Heart right ventricle (tissue), 16 donors: ENCODE measurements at regions of chr20 and their contacts with region 1.

Region 1: DNA sequence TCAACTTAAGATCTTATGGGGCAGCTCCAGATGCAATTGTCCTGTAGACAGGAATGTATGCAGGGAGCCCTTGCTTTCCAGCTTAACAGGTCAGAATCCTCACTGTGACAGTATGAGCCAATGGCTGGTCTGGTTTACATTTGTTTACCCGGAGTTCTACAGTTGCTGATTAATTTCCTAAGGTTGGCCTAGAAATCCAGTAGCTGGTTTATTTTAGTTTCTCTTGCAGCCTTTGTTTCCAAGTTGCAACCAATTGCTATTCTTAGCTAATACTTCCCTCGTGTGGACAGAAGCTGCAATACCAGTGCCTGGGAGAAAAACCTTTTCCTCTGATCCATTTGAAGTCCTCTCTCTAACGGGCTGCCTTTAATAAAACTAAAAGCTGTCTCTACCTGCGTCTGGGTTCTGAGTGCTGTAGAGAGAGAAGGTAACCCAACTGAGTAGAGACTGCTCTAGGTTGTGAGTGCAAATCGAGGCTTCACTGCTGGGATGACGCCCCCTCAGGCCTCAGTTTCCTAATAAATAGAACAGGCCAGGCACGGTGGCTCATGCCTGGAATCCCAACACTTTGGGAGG is 45.9 kb downstream of the ZNF217 start:
- DNase-seq: peak in 1 of 2 donors; percentile 45
- ATAC-seq: peak in 7 of 8 donors; percentile 70 to 85 (median 80)
- H3K4me3 ChIP-seq: no peak overlapping the region
- H3K27ac ChIP-seq: no peak overlapping the region
- H3K4me1 ChIP-seq: peaks cover 0 to 10% (median 7%) of the 10 kb centered on the region in 9 donors
- H3K27me3 ChIP-seq: no peaks in the 10 kb centered on the region
- CTCF ChIP-seq: peak; percentile 61 to 90 (median 81)

Region 2: GRCh38 chr20:52242237-52243230 is 1305.2 kb before region 1 on chr20:
- intact Hi-C with region 1: loop called in 4 of 10 experiments (anchors 5 to 10 kb)
- DNase-seq: no peak
- ATAC-seq: no peak
- H3K4me3 ChIP-seq: no peak overlapping the region
- H3K27ac ChIP-seq: no peak overlapping the region
- H3K4me1 ChIP-seq: no peaks in the 10 kb centered on the region
- H3K27me3 ChIP-seq: peaks cover 0 to 18% (median 6%) of the 10 kb centered on the region in 7 donors
- CTCF ChIP-seq: peak; percentile 54 to 78 (median 69)

Region 3: DNA sequence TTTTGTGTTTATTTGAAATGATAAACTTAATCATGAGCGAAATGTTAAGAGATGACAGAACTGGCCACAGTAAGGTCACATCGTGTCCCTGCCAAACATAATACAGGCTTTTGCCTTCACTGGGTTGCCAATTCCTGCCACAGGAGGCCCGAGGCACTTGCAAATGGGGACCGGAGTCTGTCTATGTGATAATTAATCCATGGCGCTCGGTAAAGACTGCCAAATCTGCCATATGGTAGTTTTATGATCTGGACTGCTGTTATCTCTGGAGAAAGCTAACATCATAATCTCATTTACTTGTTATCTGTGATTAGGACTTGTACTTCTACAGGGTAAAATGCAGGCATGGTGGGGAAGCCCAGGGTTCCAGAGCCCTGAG is 746.1 kb before region 1 on chr20:
- intact Hi-C with region 1: no loop called
- DNase-seq: no peak
- ATAC-seq: peak in 2 of 8 donors; percentile 74 to 85
- H3K4me3 ChIP-seq: no peak overlapping the region
- H3K27ac ChIP-seq: no peak overlapping the region
- H3K4me1 ChIP-seq: peaks cover 0 to 4% (median 0%) of the 10 kb centered on the region in 9 donors
- H3K27me3 ChIP-seq: peaks cover 0 to 2% (median 0%) of the 10 kb centered on the region in 7 donors
- CTCF ChIP-seq: no peak

Region 4: DNA sequence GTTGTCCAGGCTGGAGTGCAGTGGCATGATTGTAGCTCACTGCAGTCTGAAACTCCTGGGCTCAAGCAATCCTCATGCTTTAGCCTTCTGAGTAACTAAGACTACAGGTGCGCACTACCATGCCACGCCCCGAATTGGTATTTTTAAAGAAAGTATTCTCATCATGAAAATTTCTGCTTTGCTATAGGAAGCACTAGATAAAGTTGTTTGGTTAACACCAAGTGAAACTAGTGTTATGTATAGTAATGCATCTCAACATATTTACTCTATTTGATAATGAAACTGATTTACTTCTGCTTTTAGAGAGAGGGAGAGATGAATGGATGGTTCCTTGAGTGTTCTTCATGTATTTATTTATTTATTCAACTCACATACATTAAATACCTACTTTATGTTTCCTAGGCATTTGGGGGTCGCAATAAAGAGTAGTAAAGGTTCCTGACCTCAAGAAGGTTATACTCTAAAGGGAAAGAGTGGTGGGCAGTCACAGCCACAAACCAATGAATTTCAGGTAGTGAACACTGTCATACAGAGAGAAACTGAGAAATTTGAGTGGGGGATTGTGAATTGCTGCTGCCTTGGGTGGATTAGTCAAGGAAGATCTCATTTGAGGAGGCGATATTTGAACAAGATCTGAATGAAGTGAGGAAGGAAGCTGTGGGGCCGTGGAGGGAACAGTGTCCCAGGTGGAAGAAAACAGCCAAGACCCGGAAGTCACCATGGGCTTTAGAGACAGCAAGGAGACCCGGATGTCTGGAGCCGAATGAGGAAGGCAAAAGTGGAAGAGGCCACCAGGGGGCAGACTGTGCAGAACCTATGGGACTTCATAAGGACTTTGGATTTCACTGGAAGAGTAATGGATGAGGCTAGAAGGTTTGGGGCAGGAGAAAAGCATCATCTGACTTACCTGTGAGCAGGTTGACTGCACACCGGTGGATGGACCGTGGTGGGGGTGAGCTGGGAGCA is 390.0 kb before region 1 on chr20:
- intact Hi-C with region 1: loop called in 2 of 10 experiments (anchors 5 to 10 kb)
- DNase-seq: peak; percentile 13 to 23
- ATAC-seq: no peak
- H3K4me3 ChIP-seq: no peak overlapping the region
- H3K27ac ChIP-seq: no peak overlapping the region
- H3K4me1 ChIP-seq: peaks cover 0 to 4% (median 0%) of the 10 kb centered on the region in 9 donors
- H3K27me3 ChIP-seq: no peaks in the 10 kb centered on the region
- CTCF ChIP-seq: peak; percentile 9 to 56 (median 37)

Region 5: GRCh38 chr20:53226826-53227225 is 320.9 kb before region 1 on chr20:
- intact Hi-C with region 1: loop called in 2 of 10 experiments (anchors 5 to 10 kb)
- DNase-seq: no peak
- ATAC-seq: no peak
- H3K4me3 ChIP-seq: no peak overlapping the region
- H3K27ac ChIP-seq: no peak overlapping the region
- H3K4me1 ChIP-seq: no peaks in the 10 kb centered on the region
- H3K27me3 ChIP-seq: peaks cover 0 to 5% (median 0%) of the 10 kb centered on the region in 7 donors
- CTCF ChIP-seq: no peak

Region 6: GRCh38 chr20:53463101-53463972 is 84.4 kb before region 1 on chr20:
- intact Hi-C with region 1: no loop called
- DNase-seq: no peak
- ATAC-seq: no peak
- H3K4me3 ChIP-seq: no peak overlapping the region
- H3K27ac ChIP-seq: no peak overlapping the region
- H3K4me1 ChIP-seq: no peaks in the 10 kb centered on the region
- H3K27me3 ChIP-seq: no peaks in the 10 kb centered on the region
- CTCF ChIP-seq: no peak